Testis (tissue), 5 donors: ENCODE measurements at regions of chr5 and their contacts with region 1.

Region 1: DNA sequence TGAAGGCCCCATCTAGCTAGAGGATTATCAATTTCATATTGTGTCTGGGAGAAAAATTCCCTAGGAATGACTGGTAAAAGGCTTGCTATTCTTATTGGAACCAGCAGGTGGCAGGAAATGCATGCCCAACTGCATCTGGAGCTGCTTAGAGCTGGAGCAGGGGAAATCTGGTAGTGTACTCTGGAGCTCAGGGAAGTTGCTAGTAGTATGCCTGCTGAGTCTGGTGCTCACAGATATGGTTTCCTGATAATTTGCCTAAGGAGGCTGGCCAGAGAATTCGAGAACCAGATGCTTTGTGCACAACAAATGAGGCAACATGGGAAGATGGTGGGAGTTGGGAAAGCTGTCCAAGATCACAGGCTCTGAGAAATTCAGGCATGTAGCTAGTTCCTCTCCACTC is 53.7 kb downstream of the G3BP1 start:
- DNase-seq: peak; percentile 79
- H3K4me3 ChIP-seq: no peak overlapping the region
- H3K27ac ChIP-seq: no peak overlapping the region
- H3K4me1 ChIP-seq: no peaks in the 10 kb centered on the region
- H3K27me3 ChIP-seq: no peaks in the 10 kb centered on the region
- CTCF ChIP-seq: peak; percentile 72 to 85 (median 83)
- POLR2A ChIP-seq: no peak

Region 2: DNA sequence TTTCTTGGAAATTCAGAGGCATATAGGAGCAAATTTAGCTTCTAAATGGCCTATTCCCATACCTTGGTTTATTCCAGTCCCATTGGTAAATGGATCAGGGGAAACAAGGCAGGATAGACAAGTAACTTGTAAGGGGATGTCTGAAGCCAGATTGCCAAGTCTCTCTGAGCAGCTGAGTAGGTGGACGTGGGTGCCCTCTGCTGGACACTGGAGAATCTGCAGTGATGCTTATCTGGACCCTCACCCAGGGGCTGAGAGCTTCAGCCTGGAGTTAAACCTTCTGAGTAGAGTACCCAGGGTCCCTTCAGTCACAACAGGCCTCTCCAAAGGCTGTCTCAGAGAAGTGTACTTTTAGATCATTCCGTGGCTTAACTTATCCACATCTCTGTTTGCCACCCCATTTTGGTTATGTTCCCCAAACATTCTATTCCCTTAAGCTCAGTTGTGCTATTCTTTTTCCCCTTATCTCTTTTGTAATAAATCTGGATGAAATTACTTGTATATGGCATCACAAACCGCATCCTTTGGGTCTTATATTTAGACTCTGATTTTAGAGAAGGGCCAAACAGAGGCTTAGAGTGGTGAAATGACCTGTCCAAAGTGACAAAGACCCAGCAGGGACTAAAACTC is 317.5 kb after region 1 on chr5:
- intact Hi-C with region 1: loop called (anchors 10 kb)
- DNase-seq: peak; percentile 75
- H3K4me3 ChIP-seq: no peak overlapping the region
- H3K27ac ChIP-seq: no peak overlapping the region
- H3K4me1 ChIP-seq: no peaks in the 10 kb centered on the region
- H3K27me3 ChIP-seq: no peaks in the 10 kb centered on the region
- CTCF ChIP-seq: peak; percentile 37 to 81 (median 75)
- POLR2A ChIP-seq: no peak

Region 3: GRCh38 chr5:152505442-152506042 is 680.1 kb after region 1 on chr5:
- intact Hi-C with region 1: loop called (anchors 5 kb)
- DNase-seq: peak; percentile 78
- H3K4me3 ChIP-seq: no peak overlapping the region
- H3K27ac ChIP-seq: no peak overlapping the region
- H3K4me1 ChIP-seq: no peaks in the 10 kb centered on the region
- H3K27me3 ChIP-seq: no peaks in the 10 kb centered on the region
- CTCF ChIP-seq: peak; percentile 34 to 56 (median 55)
- POLR2A ChIP-seq: no peak